ENCODE measurements at regions of chr11 and their contacts with region 1.

Region 1: GRCh38 chr11:30735946-30736345 is 149.8 kb upstream of the MPPED2 start:
- DNase-seq: no peak
- ATAC-seq: no peak
- H3K4me3 ChIP-seq: no peak overlapping the region
- H3K27ac ChIP-seq: no peak overlapping the region
- H3K4me1 ChIP-seq: no peaks in the 10 kb centered on the region
- H3K27me3 ChIP-seq: no peaks in the 10 kb centered on the region
- CTCF ChIP-seq: peak in 5 of 12 donors; percentile 5 to 28 (median 19)
- POLR2A ChIP-seq: no peak

Region 2: DNA sequence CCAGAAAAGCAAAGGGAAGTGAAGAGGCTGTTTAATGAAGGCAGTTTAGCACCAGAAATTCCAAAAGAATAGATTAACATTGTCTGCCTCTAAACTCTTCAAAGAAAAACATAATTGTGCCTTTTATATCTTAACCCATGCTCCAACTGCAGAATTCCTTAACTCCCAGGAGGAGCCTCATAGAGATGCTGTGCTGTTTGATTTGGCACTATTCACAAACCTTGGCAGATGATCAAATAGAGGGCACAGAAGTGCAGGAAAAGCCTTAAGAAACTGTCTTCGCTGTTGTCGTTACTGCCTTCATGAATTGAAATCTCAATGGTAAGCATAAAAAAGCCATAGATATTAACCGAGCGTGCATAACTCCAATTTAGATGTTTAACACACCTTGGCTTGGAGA is 25.7 kb before region 1 on chr11:
- intact Hi-C with region 1: no loop called
- DNase-seq: no peak
- ATAC-seq: no peak
- H3K4me3 ChIP-seq: no peak overlapping the region
- H3K27ac ChIP-seq: no peak overlapping the region
- H3K4me1 ChIP-seq: peaks cover 0 to 11% (median 0%) of the 10 kb centered on the region in 12 donors
- H3K27me3 ChIP-seq: no peaks in the 10 kb centered on the region
- CTCF ChIP-seq: no peak
- POLR2A ChIP-seq: no peak

Region 3: GRCh38 chr11:30801357-30801756 is 65.4 kb after region 1 on chr11:
- intact Hi-C with region 1: loop called in 1 of 10 experiments (anchors 10 kb)
- DNase-seq: no peak
- ATAC-seq: no peak
- H3K4me3 ChIP-seq: no peak overlapping the region
- H3K27ac ChIP-seq: no peak overlapping the region
- H3K4me1 ChIP-seq: no peaks in the 10 kb centered on the region
- H3K27me3 ChIP-seq: no peaks in the 10 kb centered on the region
- CTCF ChIP-seq: no peak
- POLR2A ChIP-seq: no peak

Region 4: GRCh38 chr11:30879322-30880005 is 143.5 kb after region 1 on chr11:
- intact Hi-C with region 1: no loop called
- DNase-seq: peak in 4 of 5 donors; percentile 37 to 75 (median 50)
- ATAC-seq: peak; percentile 81 to 94 (median 86)
- H3K4me3 ChIP-seq: peak overlapping the region in 1 of 12 donors; percentile 13
- H3K27ac ChIP-seq: peak overlapping the region in 8 of 12 donors; percentile 31 to 70 (median 63)
- H3K4me1 ChIP-seq: peaks cover 0 to 47% (median 25%) of the 10 kb centered on the region in 12 donors
- H3K27me3 ChIP-seq: no peaks in the 10 kb centered on the region
- CTCF ChIP-seq: no peak
- POLR2A ChIP-seq: no peak